ENCODE measurements at regions of chr6 and their contacts with region 1.

Region 1: DNA sequence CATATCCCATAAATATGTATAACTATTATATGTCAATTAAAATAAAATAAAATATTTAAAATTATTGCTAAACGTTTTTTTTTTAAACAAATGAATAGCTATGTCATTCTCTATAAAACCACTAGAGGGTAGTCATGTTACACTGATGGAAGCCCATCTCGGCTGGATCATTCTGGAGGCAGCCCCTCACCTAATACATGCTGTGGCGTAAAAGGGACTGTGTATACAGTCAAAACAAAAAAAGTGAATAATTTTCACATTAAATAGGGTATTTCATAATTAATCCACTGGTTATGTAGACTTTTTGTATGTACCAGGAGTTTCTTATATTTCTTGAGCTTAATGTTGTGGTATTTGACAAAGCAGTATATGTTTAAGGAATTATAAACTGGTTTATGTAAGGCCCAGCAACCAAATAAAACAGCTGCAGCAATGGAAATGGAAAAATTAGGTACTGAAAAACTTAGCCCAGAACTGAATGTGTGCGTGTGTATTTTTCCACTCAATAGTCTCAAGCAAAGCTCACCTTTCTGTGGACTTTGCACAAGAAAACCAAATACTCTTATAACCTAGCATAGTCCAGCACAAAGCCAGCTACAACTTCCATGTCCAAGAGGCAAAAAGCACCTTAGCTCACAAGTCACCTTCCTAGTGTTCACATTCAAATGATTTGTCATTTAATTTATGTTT is 81.7 kb downstream of the COL9A1 start:
- DNase-seq: peak in 1 of 3 donors; percentile 17
- ATAC-seq: peak; percentile 51 to 58
- H3K4me3 ChIP-seq: no peak overlapping the region
- H3K27ac ChIP-seq: no peak overlapping the region
- H3K4me1 ChIP-seq: no peaks in the 10 kb centered on the region
- H3K27me3 ChIP-seq: no peaks in the 10 kb centered on the region

Region 2: DNA sequence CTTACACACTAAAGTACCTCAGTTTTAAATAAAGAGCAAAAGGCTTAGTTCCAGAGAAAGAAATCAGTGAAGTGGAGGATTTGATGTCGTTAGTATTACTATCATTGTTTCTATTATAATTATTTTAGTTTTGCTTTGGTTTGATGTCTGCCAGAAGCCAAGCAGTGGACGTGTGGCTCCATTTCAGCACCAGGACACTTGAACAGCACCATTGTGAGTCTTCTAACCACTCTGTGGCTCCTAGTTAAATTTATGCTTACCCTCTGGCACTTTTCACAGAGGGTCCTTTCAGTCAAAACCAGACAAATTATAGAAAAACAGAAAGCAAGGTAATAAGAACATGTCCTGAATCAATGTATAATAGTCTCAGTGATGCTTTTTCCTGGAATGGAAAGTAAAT is 78.3 kb after region 1 on chr6:
- intact Hi-C with region 1: loop called in 1 of 4 experiments (anchors 10 kb)
- DNase-seq: no peak
- ATAC-seq: no peak
- H3K4me3 ChIP-seq: no peak overlapping the region
- H3K27ac ChIP-seq: no peak overlapping the region
- H3K4me1 ChIP-seq: no peaks in the 10 kb centered on the region
- H3K27me3 ChIP-seq: no peaks in the 10 kb centered on the region

Region 3: DNA sequence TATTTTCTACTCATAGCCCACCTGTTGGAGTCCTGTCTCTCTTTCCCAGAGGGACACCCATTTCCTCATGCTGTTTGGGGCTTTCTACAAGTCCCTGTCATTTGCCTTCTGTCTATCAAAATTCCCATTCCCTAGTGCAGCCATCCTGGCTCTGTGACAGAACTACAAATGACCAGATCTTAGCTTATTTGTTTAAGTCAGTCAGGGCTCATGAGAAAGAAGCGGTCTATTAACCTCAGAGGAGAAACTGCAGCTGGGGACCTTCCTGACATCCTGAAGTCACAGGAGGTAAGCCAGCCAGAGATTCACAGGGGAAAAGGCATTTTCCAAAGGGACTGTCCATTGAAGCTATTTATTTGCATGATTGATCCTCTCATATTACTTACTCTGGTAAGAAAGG is 83.4 kb after region 1 on chr6:
- intact Hi-C with region 1: loop called in 2 of 4 experiments (anchors 5 to 10 kb)
- DNase-seq: no peak
- ATAC-seq: no peak
- H3K4me3 ChIP-seq: no peak overlapping the region
- H3K27ac ChIP-seq: no peak overlapping the region
- H3K4me1 ChIP-seq: no peaks in the 10 kb centered on the region
- H3K27me3 ChIP-seq: no peaks in the 10 kb centered on the region

Measured in right cardiac atrium (tissue), 5 donors.